ENCODE measurements at regions of chr20 and their contacts with region 1.

Region 1: DNA sequence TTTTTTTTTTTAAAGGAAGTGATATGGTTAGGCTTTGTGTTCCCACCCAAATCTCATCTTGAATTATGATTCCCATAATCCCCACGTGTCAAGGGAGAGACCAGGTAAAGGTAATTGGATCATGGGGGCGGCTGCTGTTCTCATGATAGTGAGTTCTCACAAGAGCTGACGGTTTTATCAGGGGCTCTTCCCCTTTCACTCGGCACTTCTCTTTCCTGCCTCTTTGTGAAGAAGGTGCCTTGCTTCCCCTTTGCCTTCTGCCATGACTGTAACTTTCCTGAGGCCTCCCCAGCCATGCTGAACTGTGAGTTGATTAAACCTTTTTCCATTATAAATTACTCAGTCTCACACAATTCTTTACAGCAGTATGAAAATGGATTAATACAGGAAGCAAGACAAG is 64.3 kb downstream of the ZFP64 start:
- DNase-seq: no peak
- H3K4me3 ChIP-seq: no peak overlapping the region
- H3K4me3 Mint-ChIP-seq: no peak overlapping the region
- H3K27ac Mint-ChIP-seq: no peak overlapping the region
- H3K4me1 ChIP-seq: no peaks in the 10 kb centered on the region
- H3K4me1 Mint-ChIP-seq: no peaks in the 10 kb centered on the region
- H3K27me3 ChIP-seq: no peaks in the 10 kb centered on the region
- H3K27me3 Mint-ChIP-seq: peaks cover 6% of the 10 kb centered on the region
- CTCF ChIP-seq: no peak

Region 2: GRCh38 chr20:52150440-52151258 is 23.3 kb after region 1 on chr20:
- CTCF ChIA-PET with region 1: interaction called, 60 read pairs
- POLR2A ChIA-PET with region 1: no interaction called
- intact Hi-C with region 1: loop called (anchors 1 kb)
- DNase-seq: peak in 1 of 2 experiments; percentile 75
- H3K4me3 ChIP-seq: no peak overlapping the region
- H3K4me3 Mint-ChIP-seq: no peak overlapping the region
- H3K27ac Mint-ChIP-seq: no peak overlapping the region
- H3K4me1 ChIP-seq: no peaks in the 10 kb centered on the region
- H3K4me1 Mint-ChIP-seq: no peaks in the 10 kb centered on the region
- H3K27me3 ChIP-seq: no peaks in the 10 kb centered on the region
- H3K27me3 Mint-ChIP-seq: no peaks in the 10 kb centered on the region
- CTCF ChIP-seq: peak; percentile 96 to 97

Region 3: DNA sequence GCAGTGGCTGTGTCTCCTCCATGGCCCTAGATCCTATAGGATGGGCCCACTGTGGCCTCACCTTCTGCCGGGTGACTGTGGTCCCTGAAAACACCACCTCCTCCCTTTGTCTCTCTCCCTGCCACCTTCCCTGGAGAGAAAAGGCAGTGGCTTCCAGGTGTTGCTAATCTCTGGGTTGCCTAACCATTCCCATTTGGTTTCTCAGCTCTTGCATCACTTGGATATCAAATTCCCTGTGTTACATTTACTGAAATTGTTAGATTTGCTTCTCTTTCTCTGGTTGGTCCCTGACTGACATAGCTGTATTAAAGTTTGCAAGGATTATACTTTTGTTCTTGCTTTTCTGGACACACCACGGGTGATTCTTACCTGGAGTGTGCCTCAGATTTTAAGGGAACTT is 73.6 kb after region 1 on chr20:
- CTCF ChIA-PET with region 1: interaction called, 3 read pairs
- POLR2A ChIA-PET with region 1: interaction called, 3 read pairs
- intact Hi-C with region 1: loop called (anchors 1 kb)
- DNase-seq: no peak
- H3K4me3 ChIP-seq: no peak overlapping the region
- H3K4me3 Mint-ChIP-seq: no peak overlapping the region
- H3K27ac Mint-ChIP-seq: no peak overlapping the region
- H3K4me1 ChIP-seq: no peaks in the 10 kb centered on the region
- H3K4me1 Mint-ChIP-seq: no peaks in the 10 kb centered on the region
- H3K27me3 ChIP-seq: no peaks in the 10 kb centered on the region
- H3K27me3 Mint-ChIP-seq: no peaks in the 10 kb centered on the region
- CTCF ChIP-seq: no peak

Region 4: DNA sequence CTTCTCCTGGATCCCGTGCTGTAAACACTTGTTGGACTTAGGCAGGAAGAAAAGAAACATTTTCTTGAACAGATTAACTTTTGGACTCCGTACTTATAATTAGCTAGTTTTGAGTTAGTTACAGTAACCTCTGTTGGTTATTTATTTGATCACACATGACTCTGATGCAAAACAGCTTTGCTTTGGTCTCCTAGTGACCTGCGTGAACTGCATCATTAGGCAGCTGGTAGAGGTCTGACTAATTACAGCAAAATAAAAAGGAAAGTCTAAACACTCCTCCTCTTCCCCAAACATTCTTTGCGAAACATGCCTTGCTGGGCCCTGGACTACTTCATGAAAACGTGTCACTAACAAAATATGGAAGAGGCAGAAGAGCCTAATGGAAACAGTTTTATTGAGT is 125.4 kb after region 1 on chr20:
- CTCF ChIA-PET with region 1: no interaction called
- POLR2A ChIA-PET with region 1: no interaction called
- intact Hi-C with region 1: no loop called
- DNase-seq: no peak
- H3K4me3 ChIP-seq: no peak overlapping the region
- H3K4me3 Mint-ChIP-seq: no peak overlapping the region
- H3K27ac Mint-ChIP-seq: no peak overlapping the region
- H3K4me1 ChIP-seq: no peaks in the 10 kb centered on the region
- H3K4me1 Mint-ChIP-seq: no peaks in the 10 kb centered on the region
- H3K27me3 ChIP-seq: no peaks in the 10 kb centered on the region
- H3K27me3 Mint-ChIP-seq: peaks cover 8% of the 10 kb centered on the region
- CTCF ChIP-seq: no peak

Region 5: DNA sequence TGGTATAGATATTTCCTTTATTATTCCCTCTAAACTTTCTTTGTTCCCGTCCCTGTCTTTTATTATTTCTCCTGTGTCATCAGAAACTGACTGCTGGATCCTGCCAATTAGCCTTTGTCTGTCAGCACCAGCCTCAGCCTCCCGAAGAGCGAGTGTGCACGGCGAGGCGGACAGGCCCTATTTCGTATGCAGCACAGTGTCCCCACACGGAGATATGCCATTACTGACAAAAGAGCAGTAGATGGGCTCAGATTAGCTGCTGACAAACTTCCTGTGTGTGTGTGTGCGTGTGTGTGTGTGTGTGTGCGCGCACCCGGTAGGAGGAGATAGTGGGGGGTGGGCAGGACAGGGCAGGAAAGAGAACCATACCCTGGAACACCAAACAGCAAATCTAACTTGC is 163.8 kb after region 1 on chr20:
- CTCF ChIA-PET with region 1: no interaction called
- POLR2A ChIA-PET with region 1: no interaction called
- intact Hi-C with region 1: no loop called
- DNase-seq: no peak
- H3K4me3 ChIP-seq: no peak overlapping the region
- H3K4me3 Mint-ChIP-seq: no peak overlapping the region
- H3K27ac Mint-ChIP-seq: no peak overlapping the region
- H3K4me1 ChIP-seq: no peaks in the 10 kb centered on the region
- H3K4me1 Mint-ChIP-seq: no peaks in the 10 kb centered on the region
- H3K27me3 ChIP-seq: no peaks in the 10 kb centered on the region; the same call in 1 of the 2 replicates
- H3K27me3 Mint-ChIP-seq: peaks cover 13% of the 10 kb centered on the region
- CTCF ChIP-seq: no peak

Region 6: GRCh38 chr20:52312132-52312729 is 184.9 kb after region 1 on chr20:
- CTCF ChIA-PET with region 1: interaction called, 21 read pairs
- POLR2A ChIA-PET with region 1: no interaction called
- intact Hi-C with region 1: loop called (anchors 2 kb)
- DNase-seq: peak; percentile 63 to 75
- H3K4me3 ChIP-seq: no peak overlapping the region
- H3K4me3 Mint-ChIP-seq: no peak overlapping the region
- H3K27ac Mint-ChIP-seq: no peak overlapping the region
- H3K4me1 ChIP-seq: no peaks in the 10 kb centered on the region
- H3K4me1 Mint-ChIP-seq: no peaks in the 10 kb centered on the region
- H3K27me3 ChIP-seq: no peaks in the 10 kb centered on the region
- H3K27me3 Mint-ChIP-seq: peaks cover 26% of the 10 kb centered on the region
- CTCF ChIP-seq: peak; percentile 91 to 97

Region 7: GRCh38 chr20:52500157-52500556 is 372.8 kb after region 1 on chr20:
- CTCF ChIA-PET with region 1: no interaction called
- POLR2A ChIA-PET with region 1: no interaction called
- intact Hi-C with region 1: no loop called
- DNase-seq: no peak
- H3K4me3 ChIP-seq: no peak overlapping the region
- H3K4me3 Mint-ChIP-seq: no peak overlapping the region
- H3K27ac Mint-ChIP-seq: no peak overlapping the region
- H3K4me1 ChIP-seq: no peaks in the 10 kb centered on the region
- H3K4me1 Mint-ChIP-seq: no peaks in the 10 kb centered on the region
- H3K27me3 ChIP-seq: peaks cover 4% of the 10 kb centered on the region; the same call in 1 of the 2 replicates
- H3K27me3 Mint-ChIP-seq: peaks cover 21% of the 10 kb centered on the region
- CTCF ChIP-seq: no peak

Measured in Caco-2 (cell line).